Dorsolateral prefrontal cortex (tissue), 120 donors: ENCODE measurements at regions of chr6 and their contacts with region 1.

Region 1: GRCh38 chr6:15264902-15265761 is 19.3 kb downstream of the JARID2 start:
- DNase-seq: peak in 6 of 10 donors; percentile 24 to 78 (median 62)
- H3K4me3 ChIP-seq: peak overlapping the region in 45 of 59 donors; percentile 1 to 57 (median 25)
- H3K27ac ChIP-seq: peak overlapping the region; percentile 53 to 93 (median 85)
- H3K27me3 ChIP-seq: no peaks in the 10 kb centered on the region
- CTCF ChIP-seq: peak in 2 of 56 donors; percentile 13 to 19

Region 2: DNA sequence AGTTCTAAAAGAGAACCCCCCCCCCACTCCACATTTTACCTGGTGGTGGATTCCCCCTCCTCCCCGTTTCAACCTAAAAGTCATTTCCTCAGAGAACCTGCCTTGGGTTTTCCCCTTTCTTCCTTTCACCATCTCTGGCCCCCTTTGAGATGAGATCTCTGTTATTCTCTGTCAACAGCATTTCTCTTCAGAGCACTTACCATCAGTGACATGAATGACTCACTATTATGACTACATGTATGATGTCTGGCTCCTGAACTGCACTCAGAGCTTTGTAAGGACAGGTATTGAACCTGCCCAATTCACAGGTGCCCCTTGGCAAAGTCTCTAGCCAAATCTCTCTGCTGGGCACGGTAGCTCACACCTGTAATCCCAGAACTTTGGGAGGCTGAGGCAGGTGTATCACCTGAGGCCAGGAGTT is 80.7 kb before region 1 on chr6:
- intact Hi-C with region 1: no loop called
- DNase-seq: no peak
- H3K4me3 ChIP-seq: no peak overlapping the region
- H3K27ac ChIP-seq: no peak overlapping the region
- H3K27me3 ChIP-seq: no peaks in the 10 kb centered on the region
- CTCF ChIP-seq: no peak

Region 3: DNA sequence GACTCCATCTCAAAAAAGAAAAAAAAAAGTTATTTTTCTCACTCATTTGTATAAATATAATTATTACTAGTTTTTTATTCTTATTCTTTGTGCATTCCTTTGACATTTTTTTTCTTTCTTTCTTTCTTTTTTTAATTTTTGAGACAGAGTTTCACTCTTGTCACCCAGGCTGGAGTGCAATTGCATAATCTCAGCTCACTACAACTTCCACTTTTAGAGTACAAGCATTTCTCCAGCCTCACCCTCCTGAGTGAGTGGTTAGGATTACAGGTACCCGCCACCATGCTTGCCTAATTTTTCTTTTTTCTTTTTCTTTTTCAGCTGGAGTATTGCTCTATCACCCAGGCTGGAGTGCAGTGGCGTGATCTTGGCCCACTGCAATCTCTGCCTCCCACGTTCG is 70.7 kb before region 1 on chr6:
- intact Hi-C with region 1: no loop called
- DNase-seq: no peak
- H3K4me3 ChIP-seq: no peak overlapping the region
- H3K27ac ChIP-seq: no peak overlapping the region
- H3K27me3 ChIP-seq: no peaks in the 10 kb centered on the region
- CTCF ChIP-seq: no peak

Region 4: DNA sequence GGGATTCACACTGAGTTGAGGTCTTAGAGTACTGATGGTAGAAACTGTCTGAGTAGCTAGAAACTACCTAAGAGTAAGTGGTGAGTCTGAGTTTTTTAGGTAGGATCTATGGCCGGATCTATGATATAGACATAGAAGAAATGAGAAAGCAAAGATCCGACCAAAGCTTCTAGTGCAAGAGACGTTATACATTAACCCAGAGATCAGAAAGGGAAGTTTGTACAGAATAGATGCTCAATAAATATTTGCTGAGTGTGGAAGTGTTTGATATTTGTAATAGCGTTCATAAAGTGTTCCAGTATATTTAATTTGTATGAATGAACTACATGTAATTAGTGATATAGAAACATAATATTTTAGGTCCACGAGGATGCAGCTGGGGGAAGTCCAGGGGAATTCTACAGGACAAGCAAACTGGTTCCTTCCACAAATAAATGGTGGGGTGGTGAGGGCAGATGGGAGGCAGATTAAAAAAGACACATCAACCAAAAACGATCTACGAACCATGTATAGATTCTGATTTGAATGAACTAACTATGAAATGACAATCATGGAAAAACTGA is 51.2 kb before region 1 on chr6:
- intact Hi-C with region 1: no loop called
- DNase-seq: no peak
- H3K4me3 ChIP-seq: no peak overlapping the region
- H3K27ac ChIP-seq: no peak overlapping the region
- H3K27me3 ChIP-seq: no peaks in the 10 kb centered on the region
- CTCF ChIP-seq: no peak

Region 5: GRCh38 chr6:15399641-15400470 is 134.7 kb after region 1 on chr6:
- intact Hi-C with region 1: loop called in 1 of 2 experiments (anchors 5 kb)
- DNase-seq: peak; percentile 66 to 88 (median 79)
- H3K4me3 ChIP-seq: peak overlapping the region; percentile 38 to 74 (median 59)
- H3K27ac ChIP-seq: peak overlapping the region; percentile 46 to 96 (median 89)
- H3K27me3 ChIP-seq: no peaks in the 10 kb centered on the region
- CTCF ChIP-seq: peak in 5 of 56 donors; percentile 8 to 16 (median 13)